ENCODE measurements at regions of chr12 and their contacts with region 1.

Region 1: DNA sequence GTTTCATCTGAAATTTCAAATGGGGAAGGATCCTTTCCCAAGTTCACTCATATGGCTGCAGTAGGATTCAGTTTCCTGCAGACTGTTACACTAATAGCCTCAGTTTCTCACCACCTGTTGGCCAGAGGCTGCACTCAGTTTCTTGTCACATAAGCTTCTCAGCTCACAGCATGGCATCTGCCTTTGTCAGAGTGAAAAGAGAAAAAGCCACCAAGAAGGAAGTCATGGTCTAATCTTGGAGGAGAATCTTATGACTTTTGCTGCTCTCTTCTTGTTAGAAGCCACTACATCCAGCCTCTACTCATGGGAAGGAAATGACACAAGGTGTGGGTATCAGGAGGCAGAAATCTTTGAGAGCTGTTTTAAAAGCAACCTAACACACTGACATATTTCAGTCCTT is 39.4 kb upstream of the BTG1 start:
- DNase-seq: peak; percentile 41
- H3K4me3 Mint-ChIP-seq: no peak overlapping the region
- H3K27ac Mint-ChIP-seq: peak overlapping the region; percentile 44
- H3K4me1 Mint-ChIP-seq: peaks cover 56% of the 10 kb centered on the region
- H3K27me3 Mint-ChIP-seq: peaks cover 2% of the 10 kb centered on the region

Region 2: DNA sequence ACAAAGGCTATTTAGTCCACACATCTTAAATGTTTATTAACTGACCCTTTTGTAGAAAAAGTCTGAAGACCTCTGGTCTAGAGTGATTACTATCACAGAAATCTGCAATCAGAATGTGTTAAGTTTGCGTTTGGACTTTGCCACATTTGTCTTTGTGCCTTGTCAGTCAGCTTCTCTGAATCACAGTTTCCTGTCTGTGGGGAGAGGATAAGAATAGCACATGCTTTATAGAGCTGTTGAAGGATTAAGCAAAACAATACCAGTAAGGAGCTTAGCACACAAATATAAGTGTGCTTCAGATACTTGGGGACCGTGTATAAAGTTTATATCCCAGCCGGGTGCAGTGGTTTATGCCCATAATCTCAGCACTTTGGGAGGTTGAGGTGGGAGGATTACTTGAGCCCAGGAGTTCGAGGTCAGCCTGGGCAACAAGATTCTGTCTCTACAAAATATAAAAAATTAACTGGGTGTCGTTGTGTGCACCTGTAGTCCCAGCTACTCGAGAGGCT is 23.6 kb after region 1 on chr12:
- intact Hi-C with region 1: loop called (anchors 1 kb)
- DNase-seq: peak; percentile 19
- H3K4me3 Mint-ChIP-seq: peak overlapping the region; percentile 22
- H3K27ac Mint-ChIP-seq: peak overlapping the region; percentile 24
- H3K4me1 Mint-ChIP-seq: peaks cover 37% of the 10 kb centered on the region
- H3K27me3 Mint-ChIP-seq: no peaks in the 10 kb centered on the region

Region 3: DNA sequence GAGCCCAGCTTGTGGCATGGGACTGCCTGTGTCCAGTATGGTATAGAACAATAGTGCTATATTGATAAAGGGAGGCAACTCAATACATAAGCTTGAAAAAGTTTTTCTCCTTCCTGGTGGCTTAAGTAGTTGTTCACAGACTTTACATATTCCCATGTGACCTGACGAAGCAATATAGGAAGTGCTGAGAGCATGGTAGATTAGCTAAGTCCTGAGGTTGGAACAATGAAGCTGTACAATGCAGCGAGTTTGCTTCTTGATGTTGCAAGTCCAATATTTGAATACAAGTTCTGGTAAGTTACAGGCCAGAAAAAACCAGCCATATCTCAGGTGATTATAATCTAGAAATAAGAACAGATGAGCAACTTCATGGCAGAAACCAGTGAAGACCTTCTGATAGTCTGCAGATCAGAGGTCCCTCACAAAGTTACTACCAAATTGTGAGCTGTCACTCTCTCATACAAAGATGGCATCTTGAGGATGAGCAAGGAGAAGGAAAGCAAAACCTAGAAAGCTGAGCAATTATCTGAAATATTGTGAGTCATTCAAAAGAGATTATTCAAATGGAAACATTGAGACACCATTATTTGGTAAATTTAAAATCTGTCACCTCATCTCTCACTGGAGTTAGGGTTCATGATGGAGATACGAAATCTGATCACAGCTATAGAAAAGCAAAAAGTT is 33.5 kb after region 1 on chr12:
- intact Hi-C with region 1: loop called (anchors 2 kb)
- DNase-seq: no peak
- H3K4me3 Mint-ChIP-seq: no peak overlapping the region
- H3K27ac Mint-ChIP-seq: peak overlapping the region; percentile 66
- H3K4me1 Mint-ChIP-seq: peaks cover 32% of the 10 kb centered on the region
- H3K27me3 Mint-ChIP-seq: no peaks in the 10 kb centered on the region

Region 4: DNA sequence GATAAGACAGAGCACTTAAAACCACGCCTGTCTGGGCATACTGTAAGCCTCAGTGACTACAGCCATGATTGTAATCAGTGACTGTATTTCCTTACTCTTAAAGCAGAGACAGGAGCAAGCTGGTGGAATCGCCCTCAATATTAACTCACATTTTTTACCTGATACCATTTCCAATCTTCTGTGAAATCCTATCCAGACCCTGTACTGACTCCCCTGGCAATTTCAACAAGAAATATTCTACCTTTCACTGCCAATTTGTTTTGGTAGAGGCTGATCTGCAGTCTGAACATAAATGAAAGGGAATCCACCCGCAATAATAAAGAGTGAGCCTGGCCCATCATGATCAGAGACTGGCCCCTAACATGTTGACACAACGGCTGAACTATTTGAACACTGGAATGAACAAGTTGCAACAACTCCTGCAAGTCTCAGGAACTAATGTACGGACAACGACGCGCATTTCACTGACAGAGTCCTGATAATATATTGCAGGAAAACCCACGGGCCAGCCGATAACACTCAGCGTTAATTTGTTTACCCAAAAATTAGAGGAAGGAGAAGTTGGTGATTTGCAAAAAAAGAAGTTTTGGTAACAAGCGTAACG is 156.1 kb after region 1 on chr12:
- intact Hi-C with region 1: loop called (anchors 10 kb)
- DNase-seq: no peak
- H3K4me3 Mint-ChIP-seq: peak overlapping the region; percentile 52
- H3K27ac Mint-ChIP-seq: no peak overlapping the region
- H3K4me1 Mint-ChIP-seq: peaks cover 14% of the 10 kb centered on the region
- H3K27me3 Mint-ChIP-seq: no peaks in the 10 kb centered on the region

Region 5: GRCh38 chr12:92539113-92539749 is 354.2 kb after region 1 on chr12:
- intact Hi-C with region 1: loop called (anchors 1 kb)
- DNase-seq: no peak
- H3K4me3 Mint-ChIP-seq: no peak overlapping the region
- H3K27ac Mint-ChIP-seq: peak overlapping the region; percentile 93
- H3K4me1 Mint-ChIP-seq: peaks cover 60% of the 10 kb centered on the region
- H3K27me3 Mint-ChIP-seq: no peaks in the 10 kb centered on the region

Region 6: GRCh38 chr12:92593734-92594402 is 408.8 kb after region 1 on chr12:
- intact Hi-C with region 1: loop called (anchors 1 kb)
- DNase-seq: peak; percentile 66
- H3K4me3 Mint-ChIP-seq: peak overlapping the region; percentile 19
- H3K27ac Mint-ChIP-seq: peak overlapping the region; percentile 94
- H3K4me1 Mint-ChIP-seq: peaks cover 60% of the 10 kb centered on the region
- H3K27me3 Mint-ChIP-seq: no peaks in the 10 kb centered on the region

Region 7: GRCh38 chr12:93536766-93537488 is 1351.9 kb after region 1 on chr12:
- intact Hi-C with region 1: no loop called
- DNase-seq: no peak
- H3K4me3 Mint-ChIP-seq: no peak overlapping the region
- H3K27ac Mint-ChIP-seq: no peak overlapping the region
- H3K4me1 Mint-ChIP-seq: peaks cover 23% of the 10 kb centered on the region
- H3K27me3 Mint-ChIP-seq: no peaks in the 10 kb centered on the region

Measured in activated T-helper 2 cell treated with anti-CD3 and anti-CD28 coated beads, Interferon-gamma antibody, Interleukin-2, Interleukin-4, amounts not matched to agents 10 μg/mL and 5 μg/mL and 100 μg/mL, durations not matched to agents 14 hours and 24 hours and 36 hours (primary cell).